AG04449 (cell line): ENCODE measurements at regions of chr4 and their contacts with region 1.

Region 1: DNA sequence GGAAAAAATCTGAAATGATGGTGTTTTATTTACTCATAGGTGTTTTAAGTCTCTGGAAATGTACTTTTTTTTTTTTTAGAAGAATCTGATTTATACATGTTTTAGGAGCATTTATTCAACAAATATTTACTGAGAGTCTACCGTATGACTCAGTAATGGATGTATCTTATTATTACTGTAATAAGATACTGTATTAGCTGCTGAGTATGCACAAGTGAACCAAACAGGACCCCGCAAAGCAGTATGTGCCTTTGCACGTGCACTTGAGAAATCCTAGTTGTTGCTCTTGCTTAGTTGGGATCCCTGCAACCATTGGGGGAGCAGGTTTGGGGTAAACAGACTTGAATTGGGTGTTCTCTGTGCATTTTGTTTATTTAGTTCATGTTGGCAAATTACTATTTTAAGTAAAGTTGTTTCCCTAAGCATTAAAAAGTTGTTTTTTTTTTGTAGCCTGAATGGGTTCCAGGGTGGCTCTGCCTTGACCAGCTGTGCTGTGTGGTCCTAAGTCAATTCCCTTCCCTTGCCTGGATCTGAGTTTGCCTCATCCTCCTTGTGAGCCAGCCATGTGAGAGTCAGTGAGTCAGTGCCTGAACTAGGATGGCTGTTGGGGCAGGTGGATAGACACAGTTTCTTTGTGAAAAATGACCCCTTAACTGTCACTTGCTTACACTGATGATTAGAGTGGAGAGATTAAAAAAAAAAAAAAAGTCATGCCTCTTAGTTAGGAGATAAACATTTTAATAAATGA is 27.7 kb downstream of the DCUN1D4 start:
- DNase-seq: no peak
- H3K4me3 ChIP-seq: no peak overlapping the region
- CTCF ChIP-seq: no peak

Region 2: DNA sequence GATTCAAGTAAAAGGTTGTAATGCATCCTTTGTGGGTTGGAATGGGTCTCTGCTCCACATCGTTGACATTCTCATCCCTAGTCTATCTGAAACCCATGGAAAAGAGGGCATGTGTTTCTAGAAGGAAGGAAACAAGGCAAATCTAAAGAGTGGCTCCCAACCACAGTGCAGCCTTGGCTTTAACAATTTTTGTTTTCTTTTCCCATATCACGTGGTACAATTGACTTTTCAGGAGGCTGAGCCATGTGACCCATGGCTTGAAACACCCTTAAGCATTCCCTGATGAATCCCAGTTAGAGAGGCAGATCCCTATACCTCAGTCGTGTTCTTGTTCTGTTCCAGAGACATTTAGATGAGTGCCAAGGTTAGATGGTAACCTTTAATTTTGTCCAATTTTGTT is 14.9 kb before region 1 on chr4:
- CTCF ChIA-PET with region 1: no interaction called
- POLR2A ChIA-PET with region 1: no interaction called
- DNase-seq: no peak
- H3K4me3 ChIP-seq: no peak overlapping the region
- CTCF ChIP-seq: no peak

Region 3: DNA sequence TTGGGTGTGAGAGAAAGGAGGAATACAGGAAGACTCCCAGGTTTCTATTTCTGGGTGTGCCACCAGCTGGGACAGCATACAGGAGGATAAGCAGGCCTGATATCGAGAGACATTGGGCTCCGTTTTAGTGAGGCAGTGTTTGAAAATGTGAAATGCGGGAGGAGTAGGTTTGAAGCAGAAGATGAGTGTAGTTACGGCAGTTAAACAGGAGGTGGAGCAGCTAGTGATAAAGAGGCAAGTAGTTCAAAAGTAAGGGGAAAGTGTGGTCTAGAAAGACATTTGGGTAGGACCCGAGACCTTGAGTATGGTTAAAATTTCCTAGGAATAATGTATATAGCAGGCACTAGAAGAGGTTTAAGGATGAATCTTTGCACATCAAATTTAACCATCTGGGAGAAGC is 14.7 kb after region 1 on chr4:
- CTCF ChIA-PET with region 1: interaction called, 10 read pairs
- POLR2A ChIA-PET with region 1: no interaction called
- DNase-seq: no peak
- H3K4me3 ChIP-seq: no peak overlapping the region
- CTCF ChIP-seq: peak; percentile 29

Region 4: DNA sequence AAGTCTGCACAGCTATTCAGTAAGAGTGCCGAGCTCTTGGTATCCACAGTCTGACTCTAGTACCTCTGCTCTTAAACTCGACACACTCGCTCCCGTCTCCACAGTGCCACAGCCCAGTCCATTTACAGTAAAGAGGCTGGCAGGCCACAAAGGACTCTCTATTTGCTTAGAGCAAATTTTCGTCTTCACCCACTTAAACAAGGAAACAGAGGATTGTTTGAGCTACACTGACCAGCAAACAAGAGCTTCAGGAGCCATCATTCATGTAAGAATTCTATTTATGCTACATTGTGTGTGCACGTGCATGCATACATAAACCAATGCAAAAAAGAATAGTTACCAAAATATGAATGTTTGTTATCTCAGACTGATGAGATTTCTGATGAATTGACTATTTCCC is 498.3 kb after region 1 on chr4:
- CTCF ChIA-PET with region 1: no interaction called
- POLR2A ChIA-PET with region 1: no interaction called
- DNase-seq: no peak
- H3K4me3 ChIP-seq: no peak overlapping the region
- CTCF ChIP-seq: no peak